Adrenal gland (tissue), 19 donors: ENCODE measurements at regions of chr19 and their contacts with region 1.

Region 1: DNA sequence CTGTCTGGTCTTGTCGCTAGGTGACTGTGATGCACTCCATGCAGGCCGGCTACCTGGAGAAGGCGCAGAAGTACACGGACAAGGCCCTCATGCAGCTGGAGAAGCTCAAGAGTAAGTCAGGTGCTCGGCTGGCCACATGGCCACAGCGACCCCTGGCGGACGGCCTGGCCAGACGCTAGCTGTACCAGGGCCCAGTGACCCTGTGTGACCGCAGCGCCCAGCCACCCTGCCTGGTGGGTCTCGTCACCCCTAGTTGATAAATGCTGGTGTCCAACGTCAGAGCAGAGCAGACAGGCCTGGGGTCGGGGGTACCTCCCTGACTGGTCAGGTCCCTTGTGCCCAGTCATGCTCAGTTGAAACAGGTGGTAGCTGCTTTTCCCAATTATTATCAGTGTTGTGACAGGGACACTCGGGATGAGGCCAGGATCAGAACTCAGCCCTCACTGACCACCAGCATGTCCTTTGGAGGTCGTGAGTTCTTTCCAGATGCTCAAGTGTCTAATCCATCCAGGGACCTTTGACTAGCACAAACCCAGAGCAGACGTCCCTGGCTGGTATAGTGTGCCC is 22.2 kb downstream of the MAU2 start:
- DNase-seq: peak; percentile 73 to 90 (median 81)
- H3K4me3 ChIP-seq: no peak overlapping the region
- H3K27ac ChIP-seq: no peak overlapping the region
- H3K4me1 ChIP-seq: peaks cover 0 to 3% of the 10 kb centered on the region in 2 donors
- H3K27me3 ChIP-seq: no peaks in the 10 kb centered on the region
- CTCF ChIP-seq: peak; percentile 77 to 90 (median 86)
- POLR2A ChIP-seq: no peak

Region 2: DNA sequence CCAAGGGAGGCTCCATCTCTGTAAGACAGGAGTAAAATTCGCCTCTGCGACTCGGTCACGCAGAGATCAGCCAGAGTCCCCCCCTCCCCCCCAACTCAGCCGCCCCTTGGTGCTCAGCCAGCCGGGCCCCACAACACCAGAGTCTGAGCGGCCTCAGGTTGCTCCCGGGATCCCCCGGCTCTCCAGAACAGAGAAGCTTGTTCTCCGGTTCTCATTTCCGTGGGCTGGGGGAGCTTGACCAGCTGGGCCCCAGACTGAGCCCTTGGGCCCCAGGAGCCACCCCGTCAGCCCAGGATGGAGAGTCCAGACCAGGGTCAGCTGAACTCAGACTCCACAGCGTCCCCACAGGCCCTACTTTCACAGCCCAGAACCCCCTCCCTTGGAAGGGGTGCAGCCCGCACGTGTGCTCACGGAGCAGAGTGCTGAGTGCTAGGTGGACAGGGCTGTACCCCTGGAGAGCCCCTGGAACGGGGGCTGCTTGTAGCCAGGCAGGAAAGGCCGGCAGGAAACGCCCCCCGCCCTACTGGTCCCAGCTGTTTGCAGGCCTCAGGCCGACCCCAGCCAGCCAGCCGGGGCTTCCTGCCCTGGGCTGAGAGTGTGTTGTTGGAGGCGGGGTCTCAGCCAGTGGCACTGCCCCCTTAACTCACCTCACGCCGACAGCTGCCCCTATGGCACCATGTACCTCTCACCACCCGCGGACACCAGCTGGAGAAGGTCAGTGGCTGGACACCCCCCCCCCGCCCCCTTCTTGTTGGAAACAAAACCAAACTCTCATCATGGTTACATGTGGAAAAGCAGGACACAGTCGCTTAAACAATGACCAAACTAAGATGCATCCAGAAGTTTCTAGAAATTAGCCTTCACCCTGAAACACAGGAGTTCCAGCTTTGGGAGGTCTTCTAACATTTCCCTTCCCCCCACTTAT is 596.2 kb before region 1 on chr19:
- intact Hi-C with region 1: no loop called
- DNase-seq: no peak
- H3K4me3 ChIP-seq: no peak overlapping the region
- H3K27ac ChIP-seq: no peak overlapping the region
- H3K4me1 ChIP-seq: peaks cover 0 to 17% of the 10 kb centered on the region in 2 donors
- H3K27me3 ChIP-seq: no peaks in the 10 kb centered on the region
- CTCF ChIP-seq: no peak
- POLR2A ChIP-seq: no peak

Region 3: GRCh38 chr19:19145684-19146608 is 196.9 kb before region 1 on chr19:
- intact Hi-C with region 1: loop called in 1 of 2 experiments (anchors 10 kb)
- DNase-seq: peak; percentile 66 to 90 (median 78)
- H3K4me3 ChIP-seq: no peak overlapping the region
- H3K27ac ChIP-seq: no peak overlapping the region
- H3K4me1 ChIP-seq: no peaks in the 10 kb centered on the region
- H3K27me3 ChIP-seq: no peaks in the 10 kb centered on the region
- CTCF ChIP-seq: peak; percentile 81 to 99 (median 92)
- POLR2A ChIP-seq: no peak

Region 4: DNA sequence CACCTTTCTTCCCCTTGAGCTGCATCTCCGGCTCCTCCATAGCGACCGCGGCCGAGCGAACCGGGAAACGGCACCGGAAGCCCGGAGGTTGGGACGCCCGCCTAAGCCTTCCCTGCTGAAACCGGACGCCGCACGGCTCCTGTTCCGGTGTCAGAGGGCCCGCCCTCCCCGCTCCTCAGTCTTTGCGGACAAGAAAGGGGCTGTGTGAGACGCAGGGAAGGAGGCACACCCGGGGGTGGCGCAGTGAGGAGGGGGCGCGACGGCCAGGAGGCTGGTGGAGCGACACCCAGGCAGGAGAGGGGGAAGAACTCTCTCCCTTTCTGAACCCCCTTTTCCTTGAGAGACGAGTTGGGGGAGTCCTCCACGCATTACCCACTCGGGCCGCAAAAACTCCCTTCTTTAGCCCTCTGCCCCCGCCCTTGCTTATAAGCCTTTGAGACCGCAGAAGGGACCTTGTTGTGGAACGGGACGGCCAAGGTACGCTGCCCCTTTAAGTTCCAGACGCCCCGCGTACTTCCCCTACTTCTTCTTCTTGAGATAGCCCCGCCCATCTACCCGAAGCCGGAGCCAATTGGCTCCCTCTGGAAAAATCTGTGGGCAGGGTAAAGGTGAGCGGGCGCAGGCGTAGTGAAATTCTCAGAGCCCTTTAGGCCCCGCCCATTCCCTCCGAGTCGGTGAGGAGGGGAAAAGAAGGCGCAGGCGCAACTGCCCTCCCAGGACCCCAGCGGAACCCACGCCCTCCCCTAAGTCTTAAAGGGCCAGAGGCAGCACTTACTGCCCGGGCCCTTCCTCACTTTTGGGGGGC is 150.6 kb before region 1 on chr19 and contains the starts of genes BORCS8 and RFXANK:
- intact Hi-C with region 1: loop called in 1 of 2 experiments (anchors 10 kb)
- DNase-seq: peak; percentile 99 to 100 (median 99)
- H3K4me3 ChIP-seq: peak within 1 kb of the TSS; percentile 54 to 88 (median 80)
- H3K27ac ChIP-seq: peak within 1 kb of the TSS; percentile 69 to 99 (median 98)
- H3K4me1 ChIP-seq: peaks cover 9 to 40% of the 10 kb centered on the region in 2 donors
- H3K27me3 ChIP-seq: no peaks in the 10 kb centered on the region
- CTCF ChIP-seq: peak in 1 of 6 experiments; percentile 14
- POLR2A ChIP-seq: peak; percentile 24 to 86
- total RNA-seq, gene BORCS8: 8.3 to 32.2 (median 21.9) TPM
- total RNA-seq, gene RFXANK: 28.0 to 79.9 (median 51.6) TPM